Activated T-helper 1 cell treated with anti-CD3 and anti-CD28 coated beads, Interleukin-12 subunit alpha, Interleukin-12 subunit beta, Interleukin-2, Interleukin-4 antibody, amounts not matched to agents 30 ng/mL and 10 ng/mL and 1 ng/mL, durations not matched to agents 14 hours and 24 hours and 36 hours (primary cell): ENCODE measurements at regions of chr9 and their contacts with region 1.

Region 1: DNA sequence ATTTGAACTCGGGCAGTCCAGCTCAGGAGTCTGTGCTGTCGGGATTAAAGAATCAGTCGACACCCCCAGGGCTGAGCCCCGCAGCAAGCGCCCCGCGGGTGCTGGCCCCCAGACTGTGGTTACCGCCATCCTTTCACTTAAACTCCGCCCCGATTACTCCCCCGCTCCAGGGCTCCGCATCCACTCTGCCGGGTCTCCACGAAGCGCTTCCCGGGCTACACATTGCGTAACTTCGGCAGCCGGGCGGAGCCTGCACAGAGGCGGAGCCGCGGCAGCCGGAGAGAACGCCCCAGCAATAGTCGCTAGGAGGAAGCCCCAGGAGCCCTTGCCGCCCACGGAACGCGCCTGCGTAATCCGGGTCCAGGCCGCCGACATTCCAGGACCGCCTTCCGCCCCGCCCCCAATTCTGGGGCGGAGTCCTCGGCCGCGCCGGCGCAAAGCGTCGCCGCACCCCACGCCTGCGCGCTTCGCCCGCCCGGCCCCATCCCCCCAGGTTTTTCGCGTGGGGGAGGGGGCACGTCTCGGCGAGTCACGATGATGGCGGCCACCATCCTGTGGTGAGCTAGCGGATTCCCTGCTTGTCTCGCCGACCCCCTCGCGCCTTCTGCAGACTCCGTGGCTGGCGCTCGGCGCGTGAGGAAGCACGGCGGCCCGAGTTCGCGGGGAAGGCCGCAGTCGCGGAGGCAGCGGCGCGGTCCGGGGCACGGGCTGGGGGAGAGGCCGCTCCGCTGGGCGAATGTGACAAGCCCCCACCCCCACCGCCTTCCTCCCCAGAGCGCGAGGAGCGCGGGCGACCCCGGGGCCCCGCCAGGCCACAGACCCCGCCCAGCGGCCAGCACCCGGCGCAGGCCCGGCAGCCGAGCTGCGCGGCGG is at the start of gene RAD23B:
- DNase-seq: peak; percentile 97
- H3K4me3 Mint-ChIP-seq: peak within 1 kb of the TSS; percentile 96
- H3K27ac Mint-ChIP-seq: peak within 1 kb of the TSS; percentile 95
- H3K4me1 Mint-ChIP-seq: peaks cover 54% of the 10 kb centered on the region
- H3K27me3 Mint-ChIP-seq: no peaks in the 10 kb centered on the region
- total RNA-seq, gene RAD23B: 138 and 153 TPM in 2 replicates

Region 2: GRCh38 chr9:107172160-107172978 is 110.6 kb before region 1 on chr9:
- intact Hi-C with region 1: loop called (anchors 1 kb)
- DNase-seq: peak; percentile 41
- H3K4me3 Mint-ChIP-seq: no peak overlapping the region
- H3K27ac Mint-ChIP-seq: peak overlapping the region; percentile 31
- H3K4me1 Mint-ChIP-seq: peaks cover 29% of the 10 kb centered on the region
- H3K27me3 Mint-ChIP-seq: no peaks in the 10 kb centered on the region

Region 3: DNA sequence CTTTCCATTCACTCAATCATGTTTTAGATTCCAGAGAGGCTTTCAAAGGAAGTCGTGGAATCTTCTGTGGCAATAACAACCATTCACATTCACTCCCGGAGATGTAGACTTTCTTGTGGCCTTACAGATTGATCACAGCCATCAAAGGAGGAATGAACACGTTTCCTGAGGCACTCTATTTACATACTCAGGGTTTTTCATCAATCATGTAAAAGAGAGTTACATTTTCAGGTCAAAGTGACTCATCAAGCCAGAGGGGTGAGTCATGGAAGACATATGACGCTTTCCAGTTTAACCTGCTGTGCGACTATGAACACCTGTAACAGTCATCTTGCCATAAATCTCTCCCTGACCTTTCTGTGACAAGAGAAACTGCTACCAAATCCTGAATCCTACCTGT is 39.2 kb before region 1 on chr9:
- intact Hi-C with region 1: loop called (anchors 1 kb)
- DNase-seq: peak; percentile 17
- H3K4me3 Mint-ChIP-seq: no peak overlapping the region
- H3K27ac Mint-ChIP-seq: peak overlapping the region; percentile 82
- H3K4me1 Mint-ChIP-seq: peaks cover 15% of the 10 kb centered on the region
- H3K27me3 Mint-ChIP-seq: peaks cover 6% of the 10 kb centered on the region

Region 4: DNA sequence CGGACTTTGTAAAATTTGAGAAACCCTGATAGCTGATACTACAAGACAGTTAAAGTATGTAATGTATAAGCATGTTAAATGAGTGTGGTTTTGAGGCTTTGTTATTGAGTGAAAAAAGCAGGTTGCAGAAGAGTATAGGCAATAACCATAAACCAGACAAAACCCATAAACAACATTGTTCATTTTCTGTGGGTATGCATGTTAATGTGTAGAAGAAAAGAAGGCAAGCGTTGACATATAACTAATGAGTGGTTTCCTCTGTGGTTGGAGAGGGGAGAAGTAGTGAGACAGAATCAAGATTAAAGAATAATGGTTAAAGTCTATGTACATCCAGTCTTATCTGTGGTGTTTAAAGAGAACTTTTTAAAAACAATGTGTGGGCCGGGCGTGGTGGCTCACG is 26.3 kb after region 1 on chr9:
- intact Hi-C with region 1: loop called (anchors 1 kb)
- DNase-seq: no peak
- H3K4me3 Mint-ChIP-seq: peak overlapping the region; percentile 13
- H3K27ac Mint-ChIP-seq: peak overlapping the region; percentile 46
- H3K4me1 Mint-ChIP-seq: peaks cover 60% of the 10 kb centered on the region
- H3K27me3 Mint-ChIP-seq: no peaks in the 10 kb centered on the region

Region 5: GRCh38 chr9:107489687-107490605 is 207.0 kb after region 1 on chr9 and contains the start of gene KLF4:
- intact Hi-C with region 1: loop called (anchors 1 kb)
- DNase-seq: peak; percentile 54
- H3K4me3 Mint-ChIP-seq: peak within 1 kb of the TSS; percentile 70
- H3K27ac Mint-ChIP-seq: peak within 1 kb of the TSS; percentile 58
- H3K4me1 Mint-ChIP-seq: peaks cover 5% of the 10 kb centered on the region
- H3K27me3 Mint-ChIP-seq: peaks cover 67% of the 10 kb centered on the region
- total RNA-seq, gene KLF4: 2.3 and 3.3 TPM in 2 replicates

Region 6: GRCh38 chr9:109119439-109120203 is 1836.6 kb after region 1 on chr9 and contains the start of gene TMEM245:
- intact Hi-C with region 1: loop called (anchors 10 kb)
- DNase-seq: peak; percentile 91
- H3K4me3 Mint-ChIP-seq: peak within 1 kb of the TSS; percentile 95
- H3K27ac Mint-ChIP-seq: peak within 1 kb of the TSS; percentile 87
- H3K4me1 Mint-ChIP-seq: peaks cover 33% of the 10 kb centered on the region
- H3K27me3 Mint-ChIP-seq: no peaks in the 10 kb centered on the region
- total RNA-seq, gene TMEM245: 26.9 and 29.4 TPM in 2 replicates